Activated CD8-positive, alpha-beta memory T cell treated with anti-CD3 and anti-CD28 coated beads, Interleukin-2, amount 10 ng/mL, durations not matched to agents 7 days and 5 days (primary cell): ENCODE measurements at regions of chr1 and their contacts with region 1.

Region 1: GRCh38 chr1:214386747-214387146 is 105.8 kb downstream of the SMYD2 start:
- DNase-seq: no peak
- ATAC-seq: no peak
- H3K4me3 Mint-ChIP-seq: no peak overlapping the region
- H3K27ac Mint-ChIP-seq: no peak overlapping the region
- H3K4me1 Mint-ChIP-seq: peaks cover 11% of the 10 kb centered on the region
- H3K27me3 Mint-ChIP-seq: no peaks in the 10 kb centered on the region

Region 2: DNA sequence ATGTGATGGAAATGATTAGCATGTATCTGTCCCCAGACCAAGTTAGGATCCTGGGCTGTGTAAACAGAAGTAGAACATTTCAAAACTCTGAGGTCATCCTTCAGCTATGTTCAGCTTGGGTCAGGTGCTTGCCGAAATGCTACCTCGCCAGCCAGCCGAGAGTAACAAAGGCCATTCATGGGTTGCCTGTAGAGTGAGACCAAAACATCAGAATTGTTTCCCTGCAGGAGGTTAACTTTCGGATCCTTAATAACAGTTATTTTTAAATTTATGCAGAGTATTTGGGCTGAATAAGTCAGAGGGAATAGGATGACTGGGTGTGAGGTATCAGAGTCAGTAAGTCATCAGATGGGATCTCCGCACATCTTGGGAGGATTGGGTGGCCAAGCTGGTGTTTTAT is 70.2 kb before region 1 on chr1:
- CTCF ChIA-PET with region 1: no interaction called
- DNase-seq: no peak
- ATAC-seq: no peak
- H3K4me3 Mint-ChIP-seq: no peak overlapping the region
- H3K27ac Mint-ChIP-seq: no peak overlapping the region
- H3K4me1 Mint-ChIP-seq: peaks cover 4% of the 10 kb centered on the region
- H3K27me3 Mint-ChIP-seq: no peaks in the 10 kb centered on the region

Region 3: DNA sequence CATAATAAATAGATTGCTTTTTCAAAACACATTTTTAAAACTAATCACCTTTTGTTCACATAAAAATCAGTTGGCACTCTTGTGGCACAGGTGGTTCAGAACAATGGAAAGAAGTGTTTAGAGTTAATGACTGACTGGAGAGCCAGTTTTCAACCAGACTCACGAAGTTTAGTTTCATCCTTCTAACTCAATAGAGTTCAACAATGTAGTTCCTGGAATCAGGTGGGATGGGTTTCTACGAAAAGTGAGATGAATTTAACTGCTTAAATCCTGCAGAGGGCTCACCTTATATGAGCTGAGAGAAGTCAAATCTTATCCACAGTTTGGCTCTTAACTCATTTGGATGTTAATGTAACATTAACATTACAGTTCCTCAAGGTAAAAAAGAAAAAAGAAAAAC is 10.8 kb after region 1 on chr1:
- CTCF ChIA-PET with region 1: interaction called, 13 read pairs
- DNase-seq: no peak
- ATAC-seq: peak; percentile 47
- H3K4me3 Mint-ChIP-seq: no peak overlapping the region
- H3K27ac Mint-ChIP-seq: peak overlapping the region; percentile 54
- H3K4me1 Mint-ChIP-seq: peaks cover 35% of the 10 kb centered on the region
- H3K27me3 Mint-ChIP-seq: peaks cover 6% of the 10 kb centered on the region